A673 (cell line): ENCODE measurements at regions of chr20 and their contacts with region 1.

Region 1: GRCh38 chr20:41110930-41111577 is 26.3 kb upstream of the PLCG1 start:
- DNase-seq: no peak
- H3K4me3 ChIP-seq: no peak overlapping the region
- H3K27ac ChIP-seq: no peak overlapping the region
- H3K4me1 ChIP-seq: no peaks in the 10 kb centered on the region
- H3K27me3 ChIP-seq: no peaks in the 10 kb centered on the region
- CTCF ChIP-seq: no peak

Region 2: DNA sequence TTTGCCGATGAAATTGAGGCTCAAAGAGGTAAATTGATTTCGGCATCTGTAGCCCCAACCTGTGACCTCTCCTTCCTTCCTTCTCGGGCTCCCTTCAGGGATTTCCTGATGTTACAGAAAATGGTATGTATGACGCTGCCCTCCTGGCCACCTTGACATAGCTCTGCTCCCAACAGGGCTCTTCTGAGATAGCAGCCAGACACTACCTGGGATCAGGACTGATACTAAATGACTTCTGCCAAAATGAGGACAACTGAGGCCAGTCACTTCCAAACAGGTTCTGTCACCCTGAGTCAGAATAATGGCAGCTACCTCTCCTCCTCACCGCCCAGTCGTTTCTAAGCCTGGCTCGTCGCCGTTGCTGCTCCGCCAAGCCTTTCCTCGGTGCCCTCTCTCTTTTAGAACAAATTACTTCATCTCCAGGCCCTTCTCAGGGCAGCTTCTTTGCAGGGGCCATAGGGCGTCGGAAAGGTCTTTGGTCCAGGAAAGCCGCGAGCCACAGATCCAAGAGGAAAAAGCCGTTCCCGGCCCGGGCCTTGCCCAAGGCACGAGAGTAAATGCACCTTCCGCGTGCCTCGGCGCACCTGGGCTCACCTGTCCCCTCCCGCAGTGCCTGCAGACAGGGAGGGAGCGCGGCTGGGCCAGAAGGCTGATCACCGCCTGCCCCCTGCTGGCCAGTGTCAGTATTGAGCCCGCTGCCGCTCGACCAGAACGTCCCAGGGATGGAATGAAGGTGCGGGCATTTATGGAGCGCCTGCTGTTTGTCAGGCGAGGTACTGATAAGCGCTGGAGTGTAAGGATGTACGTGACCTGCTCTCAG is 228.7 kb after region 1 on chr20:
- CTCF ChIA-PET with region 1: interaction called, 10 read pairs
- POLR2A ChIA-PET with region 1: no interaction called
- intact Hi-C with region 1: no loop called
- DNase-seq: peak; percentile 70
- H3K4me3 ChIP-seq: peak overlapping the region; percentile 41
- H3K27ac ChIP-seq: no peak overlapping the region
- H3K4me1 ChIP-seq: peaks cover 5% of the 10 kb centered on the region
- H3K27me3 ChIP-seq: no peaks in the 10 kb centered on the region
- CTCF ChIP-seq: peak; percentile 98